Esophagus muscularis mucosa (tissue), 4 donors: ENCODE measurements at regions of chr10 and their contacts with region 1.

Region 1: GRCh38 chr10:26725837-26726727 is 28.6 kb downstream of the PDSS1 start:
- DNase-seq: no peak
- H3K4me3 ChIP-seq: no peak overlapping the region
- H3K27ac ChIP-seq: no peak overlapping the region
- H3K4me1 ChIP-seq: no peaks in the 10 kb centered on the region
- H3K27me3 ChIP-seq: no peaks in the 10 kb centered on the region
- CTCF ChIP-seq: peak; percentile 69 to 75 (median 71)
- EP300 ChIP-seq: no peak
- POLR2A ChIP-seq: no peak

Region 2: GRCh38 chr10:26157734-26158133 is 568.3 kb before region 1 on chr10:
- intact Hi-C with region 1: no loop called
- DNase-seq: no peak
- H3K4me3 ChIP-seq: no peak overlapping the region
- H3K27ac ChIP-seq: no peak overlapping the region
- H3K4me1 ChIP-seq: no peaks in the 10 kb centered on the region
- H3K27me3 ChIP-seq: no peaks in the 10 kb centered on the region
- CTCF ChIP-seq: no peak
- EP300 ChIP-seq: no peak
- POLR2A ChIP-seq: no peak

Region 3: DNA sequence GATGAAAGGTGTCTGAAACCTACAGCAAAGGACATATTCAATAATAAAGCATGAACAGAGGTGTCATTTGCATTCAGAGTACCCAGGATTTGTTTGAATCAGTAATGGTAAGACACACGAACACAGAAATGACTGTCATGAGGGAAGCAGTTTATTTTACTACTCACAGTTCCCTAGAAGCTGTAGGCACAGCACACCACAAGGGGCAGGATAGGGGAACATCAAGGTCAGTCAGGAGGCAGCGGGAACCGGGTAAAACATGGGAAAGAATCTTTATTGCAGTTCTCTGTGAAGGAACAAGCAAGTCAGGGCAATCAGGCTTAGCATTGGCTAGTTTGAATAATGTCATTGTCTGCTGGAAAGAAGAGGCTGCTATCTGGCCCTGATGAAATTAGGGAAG is 98.8 kb before region 1 on chr10:
- intact Hi-C with region 1: no loop called
- DNase-seq: no peak
- H3K4me3 ChIP-seq: no peak overlapping the region
- H3K27ac ChIP-seq: no peak overlapping the region
- H3K4me1 ChIP-seq: peaks cover 0 to 6% (median 2%) of the 10 kb centered on the region in 4 donors
- H3K27me3 ChIP-seq: peaks cover 0 to 44% (median under 1%) of the 10 kb centered on the region in 4 donors
- CTCF ChIP-seq: no peak
- EP300 ChIP-seq: no peak
- POLR2A ChIP-seq: no peak

Region 4: GRCh38 chr10:26860443-26861204 is 134.5 kb after region 1 on chr10 and contains the start of gene ABI1:
- intact Hi-C with region 1: loop called (anchors 5 kb)
- DNase-seq: peak; percentile 99
- H3K4me3 ChIP-seq: peak within 1 kb of the TSS; percentile 73 to 100 (median 84)
- H3K27ac ChIP-seq: peak within 1 kb of the TSS; percentile 94 to 98 (median 96)
- H3K4me1 ChIP-seq: peaks cover 28 to 44% (median 40%) of the 10 kb centered on the region in 4 donors
- H3K27me3 ChIP-seq: peaks cover 0 to 8% (median 0%) of the 10 kb centered on the region in 4 donors
- CTCF ChIP-seq: no peak
- EP300 ChIP-seq: no peak
- POLR2A ChIP-seq: peak; percentile 89
- total RNA-seq, gene ABI1: 37.4 to 57.7 (median 43.5) TPM